Posterior vena cava (tissue), 2 donors: ENCODE measurements at regions of chr5 and their contacts with region 1.

Region 1: DNA sequence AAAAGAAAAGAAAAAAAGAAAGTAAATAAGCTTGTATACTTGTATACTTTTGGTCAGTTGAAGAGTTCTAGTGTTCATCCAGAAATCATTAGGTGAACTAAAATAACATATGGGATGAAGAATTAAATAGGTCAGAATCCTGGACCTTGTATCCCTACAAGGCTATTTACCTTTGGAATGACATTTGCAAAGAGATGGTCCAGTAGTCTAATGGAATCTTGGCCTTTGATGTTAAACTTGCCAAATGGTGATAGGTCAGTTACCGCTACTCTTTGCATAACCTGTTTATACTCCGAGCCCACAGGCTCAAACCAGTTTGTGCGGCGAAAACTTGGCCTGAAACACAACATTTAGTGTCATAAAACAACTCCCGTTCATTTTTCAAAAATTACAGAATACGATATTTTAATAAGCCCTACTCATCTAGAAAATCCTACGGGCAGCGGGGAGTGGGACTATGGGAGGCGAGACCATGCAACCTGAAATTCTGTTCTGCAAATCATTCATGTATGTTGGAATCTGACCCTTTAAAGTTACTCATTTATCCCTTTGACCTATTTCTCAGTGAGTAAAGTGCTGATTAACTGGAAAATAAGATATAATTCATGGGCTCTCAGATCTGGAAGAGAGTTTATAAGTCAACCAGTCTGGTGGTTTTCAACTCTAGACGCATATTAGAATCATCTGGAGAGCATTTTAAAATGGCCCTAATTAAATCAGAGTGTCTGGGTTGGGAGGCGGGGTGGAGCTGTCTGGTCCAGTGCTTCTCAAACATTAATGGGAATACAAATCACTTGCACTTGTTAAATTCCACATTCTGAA is 38.6 kb downstream of the DMGDH start:
- DNase-seq: no peak

Region 2: GRCh38 chr5:78359831-78360673 is 670.8 kb before region 1 on chr5 and contains the start of gene SCAMP1:
- intact Hi-C with region 1: no loop called
- DNase-seq: peak; percentile 98
- total RNA-seq, gene SCAMP1: 32.4 to 46.1 TPM

Region 3: GRCh38 chr5:79059674-79060073 is 28.8 kb after region 1 on chr5:
- intact Hi-C with region 1: loop called in 1 of 2 experiments (anchors 2 kb)
- DNase-seq: no peak